ENCODE measurements at regions of chr16 and their contacts with region 1.

Region 1: DNA sequence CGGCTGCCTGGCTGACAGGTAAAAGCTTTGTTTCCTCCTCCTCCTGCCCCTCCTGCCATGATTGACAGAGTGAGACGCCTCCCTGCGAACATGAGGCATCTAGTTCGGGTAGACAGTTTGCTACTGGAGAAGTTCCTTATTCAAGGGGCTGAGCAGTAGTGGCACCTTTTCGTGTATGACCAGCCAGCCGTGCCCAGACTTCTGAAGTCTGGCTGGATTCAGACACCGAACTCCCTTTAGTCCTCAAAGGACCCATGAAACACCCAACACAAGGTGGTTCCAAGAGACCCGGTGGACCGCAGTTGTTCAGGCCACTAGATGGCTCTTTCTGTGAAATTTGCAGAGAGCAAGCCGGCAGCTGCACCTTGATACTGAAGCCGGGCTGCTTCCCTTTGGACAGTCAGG is 192.8 kb downstream of the XYLT1 start:
- DNase-seq: peak in 6 of 10 donors; percentile 9 to 65 (median 55)
- H3K4me3 ChIP-seq: no peak overlapping the region
- H3K27ac ChIP-seq: no peak overlapping the region
- H3K27me3 ChIP-seq: peaks cover 0 to 4% (median 0%) of the 10 kb centered on the region in 45 donors
- CTCF ChIP-seq: peak in 53 of 56 donors; percentile 13 to 71 (median 51)

Region 2: DNA sequence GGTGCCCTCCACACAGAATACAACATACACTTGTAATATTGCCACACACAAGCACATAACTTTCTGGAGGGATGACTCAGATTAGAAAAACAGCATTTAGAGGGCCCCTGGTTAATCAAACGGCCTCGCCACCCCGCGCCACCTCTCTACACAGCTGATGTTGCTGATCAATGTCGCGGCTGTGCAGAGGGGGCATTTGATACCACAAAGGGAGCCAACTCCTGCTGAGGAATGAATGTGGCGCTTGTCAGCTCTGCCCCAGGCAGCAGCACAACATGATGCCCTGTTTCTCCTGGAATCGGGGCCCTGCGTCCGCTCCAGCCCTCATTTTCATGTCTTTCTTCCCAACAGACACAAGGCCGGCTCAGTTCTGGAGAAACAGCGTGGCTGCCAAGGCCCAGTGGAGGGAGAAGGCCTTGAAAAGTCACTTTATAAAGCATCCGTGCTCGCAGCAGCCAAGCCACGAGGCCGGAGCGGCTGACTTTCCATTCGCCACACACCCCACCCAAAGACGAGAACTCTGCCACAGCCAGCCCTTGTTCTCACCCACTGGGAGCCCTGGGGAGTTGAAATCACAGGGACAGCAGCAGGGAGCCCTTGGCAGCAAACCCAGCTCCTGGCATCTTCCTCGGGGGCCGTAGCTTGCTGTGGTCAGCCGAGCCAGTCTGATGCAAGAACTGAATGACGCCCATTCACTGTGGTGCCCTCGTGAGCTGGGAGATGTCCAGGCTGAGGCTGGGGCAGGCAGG is 127.1 kb after region 1 on chr16:
- intact Hi-C with region 1: loop called (anchors 5 to 10 kb)
- DNase-seq: peak; percentile 36 to 97 (median 92)
- H3K4me3 ChIP-seq: peak overlapping the region in 33 of 59 donors; percentile 0 to 56 (median 25)
- H3K27ac ChIP-seq: peak overlapping the region; percentile 81 to 98 (median 94)
- H3K27me3 ChIP-seq: no peaks in the 10 kb centered on the region
- CTCF ChIP-seq: peak in 11 of 56 donors; percentile 9 to 41 (median 20)

Region 3: GRCh38 chr16:17475104-17475503 is 197.1 kb after region 1 on chr16:
- intact Hi-C with region 1: no loop called
- DNase-seq: no peak
- H3K4me3 ChIP-seq: no peak overlapping the region
- H3K27ac ChIP-seq: no peak overlapping the region
- H3K27me3 ChIP-seq: peaks cover 0 to 9% (median 0%) of the 10 kb centered on the region in 45 donors
- CTCF ChIP-seq: no peak

Measured in dorsolateral prefrontal cortex (tissue), 120 donors.